IMR-90 (cell line): ENCODE measurements at regions of chr9 and their contacts with region 1.

Region 1: DNA sequence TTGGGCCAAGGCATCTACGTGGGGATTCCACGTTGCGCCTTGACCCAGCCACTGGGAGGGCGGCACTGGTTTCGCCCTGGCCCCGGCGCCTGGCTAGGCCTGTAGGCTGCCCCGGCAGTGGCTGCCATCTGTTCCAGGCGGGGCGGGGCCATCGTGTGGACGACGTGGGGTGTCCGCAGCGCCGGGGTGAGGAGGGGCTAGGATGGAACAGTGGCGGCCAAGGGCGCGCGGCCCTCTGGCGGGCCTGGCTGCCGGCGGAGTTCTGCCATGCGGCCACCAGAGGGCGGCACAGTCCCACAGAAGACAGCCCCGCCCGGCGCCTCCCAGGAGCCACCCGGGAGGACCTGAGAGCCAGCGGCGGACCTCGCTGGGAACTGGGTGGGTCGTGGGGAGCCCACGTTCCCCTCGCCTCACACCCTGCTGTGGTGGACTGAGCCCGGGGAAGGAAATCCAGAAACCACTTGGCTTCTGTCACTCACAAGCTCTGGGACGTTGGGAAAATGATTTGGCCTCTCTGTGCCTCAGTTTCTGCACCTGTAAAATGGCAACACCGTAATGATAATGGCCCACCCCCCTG is 22.6 kb upstream of the RAPGEF1 start:
- DNase-seq: peak; percentile 29
- ATAC-seq: peak; percentile 98
- H3K4me3 ChIP-seq: no peak overlapping the region
- H3K27ac ChIP-seq: no peak overlapping the region
- H3K4me1 ChIP-seq: peaks cover 2% of the 10 kb centered on the region; the same call in 1 of the 2 replicates
- H3K27me3 ChIP-seq: peaks cover 37% of the 10 kb centered on the region
- CTCF ChIP-seq: peak; percentile 90
- POLR2A ChIP-seq: 0 out of 2 replicates have a peak, but pooled peaks have one; percentile 37
- RAD21 ChIP-seq: peak; percentile 94

Region 2: DNA sequence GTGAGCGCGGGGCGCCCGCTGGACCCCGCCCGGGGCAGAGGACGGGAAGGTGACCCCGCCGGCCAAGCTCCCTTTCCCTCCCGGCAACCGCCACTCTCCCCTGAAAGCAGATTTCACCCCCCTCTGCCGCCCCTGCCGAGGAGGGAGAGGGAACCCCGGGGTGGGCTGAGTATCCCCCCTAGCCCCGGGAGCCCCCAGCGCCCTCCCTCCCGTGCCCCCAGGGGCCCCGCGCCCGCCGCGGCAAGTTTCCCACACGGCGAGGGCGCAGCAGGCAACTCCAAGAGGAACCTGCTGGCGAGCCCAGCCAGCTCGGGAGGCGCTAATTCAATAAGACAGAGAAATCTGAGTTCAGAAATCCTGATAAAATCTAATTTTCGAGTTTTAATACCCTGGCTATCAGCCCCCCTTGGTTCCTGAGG is 401.0 kb after region 1 on chr9:
- CTCF ChIA-PET with region 1: no interaction called
- POLR2A ChIA-PET with region 1: no interaction called
- dilution Hi-C with region 1: no loop called
- in situ Hi-C with region 1: loop called (anchors 10 kb)
- intact Hi-C with region 1: loop called (anchors 2 kb)
- DNase-seq: peak; percentile 14
- ATAC-seq: no peak
- H3K4me3 ChIP-seq: no peak overlapping the region
- H3K27ac ChIP-seq: no peak overlapping the region
- H3K4me1 ChIP-seq: peaks cover 2% of the 10 kb centered on the region; the same call in 1 of the 2 replicates
- H3K27me3 ChIP-seq: peaks cover 60% of the 10 kb centered on the region
- CTCF ChIP-seq: no peak
- POLR2A ChIP-seq: no peak
- RAD21 ChIP-seq: no peak

Region 3: DNA sequence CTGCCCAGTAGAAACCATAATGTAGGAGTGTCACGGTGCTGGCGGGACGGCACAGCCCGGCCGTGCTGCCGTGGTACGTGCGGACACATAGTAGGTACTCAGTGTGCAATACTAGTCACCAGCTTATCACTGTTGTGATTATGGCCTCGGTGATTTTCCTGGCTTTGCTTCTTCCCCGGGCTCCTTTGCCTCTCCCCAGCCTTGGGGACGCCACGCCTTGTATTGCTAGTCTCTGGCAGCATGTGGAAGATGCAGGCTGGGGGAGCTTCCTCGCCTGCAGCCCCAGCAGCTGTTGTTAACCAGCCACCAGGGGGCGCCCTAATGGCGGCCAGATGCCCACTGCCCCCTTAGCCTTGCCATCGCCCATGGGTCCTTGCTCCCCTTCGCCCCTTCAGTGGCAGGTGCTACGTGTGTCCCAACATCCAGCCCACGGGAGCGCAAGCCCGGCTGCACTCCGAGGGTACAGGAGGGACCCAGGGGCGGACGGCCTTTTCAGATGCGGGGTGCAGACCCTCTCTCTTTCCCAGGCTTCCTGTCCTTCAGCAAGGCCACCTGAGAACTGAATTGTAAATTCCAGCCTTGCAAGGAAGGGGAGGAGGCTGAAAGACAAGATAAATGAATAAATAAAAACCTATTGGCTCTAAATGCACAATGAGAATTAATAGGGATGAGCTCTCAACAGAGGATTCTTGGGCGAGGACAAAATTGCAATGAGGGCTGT is 407.4 kb after region 1 on chr9:
- CTCF ChIA-PET with region 1: no interaction called
- POLR2A ChIA-PET with region 1: no interaction called
- dilution Hi-C with region 1: no loop called
- in situ Hi-C with region 1: loop called (anchors 10 kb)
- intact Hi-C with region 1: no loop called
- DNase-seq: peak; percentile 51
- ATAC-seq: peak; percentile 70
- H3K4me3 ChIP-seq: no peak overlapping the region
- H3K27ac ChIP-seq: no peak overlapping the region
- H3K4me1 ChIP-seq: no peaks in the 10 kb centered on the region; the same call in 1 of the 2 replicates
- H3K27me3 ChIP-seq: peaks cover 18% of the 10 kb centered on the region
- CTCF ChIP-seq: peak; percentile 73
- POLR2A ChIP-seq: no peak
- RAD21 ChIP-seq: peak; percentile 71

Region 4: DNA sequence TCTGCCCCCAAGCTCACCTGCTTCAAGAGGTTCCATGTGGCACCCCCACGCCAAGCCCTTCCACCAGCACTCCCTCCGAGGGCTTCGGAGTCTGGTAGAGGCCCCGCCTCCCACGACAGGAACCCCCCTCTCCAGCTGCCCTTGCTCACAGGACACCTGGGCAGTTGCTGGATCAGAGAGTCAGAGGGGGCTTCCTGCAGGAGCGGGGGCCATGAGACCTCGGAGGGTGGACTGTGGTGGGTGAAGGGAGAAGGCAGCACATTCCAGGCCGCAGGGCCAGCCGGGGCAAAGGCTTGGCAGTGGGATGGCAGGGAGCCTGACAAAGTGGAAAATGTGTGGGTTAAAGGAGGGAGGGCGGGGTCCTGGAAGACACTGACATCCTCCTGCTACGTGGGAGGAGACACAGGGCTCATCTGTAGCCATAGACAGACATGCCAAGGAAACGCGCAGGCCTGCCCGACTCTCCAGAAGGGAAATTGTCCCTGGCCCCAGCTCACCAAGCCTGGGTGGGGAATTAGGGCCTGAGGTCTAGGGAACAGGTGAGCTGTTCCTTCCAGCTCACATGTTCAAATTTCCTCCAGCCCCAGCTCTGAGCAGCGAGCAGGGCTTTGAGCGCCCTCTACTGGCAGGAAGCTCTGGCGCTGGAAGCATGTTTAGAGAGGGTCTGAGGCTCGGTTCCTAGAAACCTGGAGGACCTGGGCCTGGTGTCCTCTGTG is 473.7 kb after region 1 on chr9:
- CTCF ChIA-PET with region 1: interaction called, 4 read pairs
- POLR2A ChIA-PET with region 1: no interaction called
- dilution Hi-C with region 1: no loop called
- in situ Hi-C with region 1: no loop called
- intact Hi-C with region 1: loop called (anchors 1 kb)
- DNase-seq: peak; percentile 56
- ATAC-seq: peak; percentile 33
- H3K4me3 ChIP-seq: no peak overlapping the region
- H3K27ac ChIP-seq: no peak overlapping the region
- H3K4me1 ChIP-seq: peaks cover 3% of the 10 kb centered on the region; the same call in 1 of the 2 replicates
- H3K27me3 ChIP-seq: peaks cover 56% of the 10 kb centered on the region
- CTCF ChIP-seq: peak; percentile 94
- POLR2A ChIP-seq: peak; percentile 49; the same call in 1 of the 2 replicates
- RAD21 ChIP-seq: peak; percentile 97

Region 5: DNA sequence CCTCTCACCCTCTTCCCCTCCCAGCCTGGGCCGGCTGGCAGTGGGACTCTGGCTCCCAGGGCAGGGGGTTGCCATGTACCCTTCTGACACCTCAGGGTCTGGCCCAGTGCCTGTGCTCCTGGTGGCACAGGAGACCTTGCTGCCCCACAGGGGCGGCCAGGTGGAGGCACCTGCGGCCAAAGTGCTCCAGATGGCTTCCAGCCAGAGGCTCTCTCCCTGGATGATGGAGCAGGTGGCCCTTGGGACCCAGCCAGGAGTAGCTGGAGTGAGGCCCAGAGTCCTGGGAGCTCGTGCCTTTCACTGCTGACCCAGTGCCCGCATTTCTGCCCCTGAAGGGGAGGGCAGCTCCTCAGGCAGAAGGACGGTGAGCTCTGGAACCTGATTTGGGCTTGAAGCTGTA is 486.7 kb after region 1 on chr9:
- CTCF ChIA-PET with region 1: interaction called, 19 read pairs
- POLR2A ChIA-PET with region 1: no interaction called
- dilution Hi-C with region 1: no loop called
- in situ Hi-C with region 1: loop called (anchors 5 kb)
- intact Hi-C with region 1: loop called (anchors 1 kb)
- DNase-seq: no peak
- ATAC-seq: no peak
- H3K4me3 ChIP-seq: no peak overlapping the region
- H3K27ac ChIP-seq: no peak overlapping the region
- H3K4me1 ChIP-seq: no peaks in the 10 kb centered on the region
- H3K27me3 ChIP-seq: peaks cover 35% of the 10 kb centered on the region
- CTCF ChIP-seq: no peak
- POLR2A ChIP-seq: no peak
- RAD21 ChIP-seq: no peak